Mucosa of descending colon (tissue), 3 donors: ENCODE measurements at regions of chr5 and their contacts with region 1.

Region 1: GRCh38 chr5:153964880-153965645 is 73.6 kb downstream of the FAM114A2 start:
- DNase-seq: peak in 2 of 3 donors; percentile 16 to 31
- ATAC-seq: peak; percentile 59
- H3K4me3 ChIP-seq: no peak overlapping the region
- H3K4me1 ChIP-seq: no peaks in the 10 kb centered on the region
- CTCF ChIP-seq: peak; percentile 55

Region 2: GRCh38 chr5:152532714-152533113 is 1432.3 kb before region 1 on chr5:
- intact Hi-C with region 1: loop called (anchors 5 to 10 kb)
- DNase-seq: peak in 1 of 3 donors; percentile 17
- ATAC-seq: peak; percentile 30
- H3K4me3 ChIP-seq: no peak overlapping the region
- H3K4me1 ChIP-seq: no peaks in the 10 kb centered on the region
- CTCF ChIP-seq: no peak